BJ (cell line): ENCODE measurements at regions of chr5 and their contacts with region 1.

Region 1: GRCh38 chr5:177271113-177271512 is 32.4 kb downstream of the RAB24 start:
- DNase-seq: no peak
- H3K4me3 ChIP-seq: no peak overlapping the region
- H3K27me3 ChIP-seq: no peaks in the 10 kb centered on the region
- CTCF ChIP-seq: no peak

Region 2: DNA sequence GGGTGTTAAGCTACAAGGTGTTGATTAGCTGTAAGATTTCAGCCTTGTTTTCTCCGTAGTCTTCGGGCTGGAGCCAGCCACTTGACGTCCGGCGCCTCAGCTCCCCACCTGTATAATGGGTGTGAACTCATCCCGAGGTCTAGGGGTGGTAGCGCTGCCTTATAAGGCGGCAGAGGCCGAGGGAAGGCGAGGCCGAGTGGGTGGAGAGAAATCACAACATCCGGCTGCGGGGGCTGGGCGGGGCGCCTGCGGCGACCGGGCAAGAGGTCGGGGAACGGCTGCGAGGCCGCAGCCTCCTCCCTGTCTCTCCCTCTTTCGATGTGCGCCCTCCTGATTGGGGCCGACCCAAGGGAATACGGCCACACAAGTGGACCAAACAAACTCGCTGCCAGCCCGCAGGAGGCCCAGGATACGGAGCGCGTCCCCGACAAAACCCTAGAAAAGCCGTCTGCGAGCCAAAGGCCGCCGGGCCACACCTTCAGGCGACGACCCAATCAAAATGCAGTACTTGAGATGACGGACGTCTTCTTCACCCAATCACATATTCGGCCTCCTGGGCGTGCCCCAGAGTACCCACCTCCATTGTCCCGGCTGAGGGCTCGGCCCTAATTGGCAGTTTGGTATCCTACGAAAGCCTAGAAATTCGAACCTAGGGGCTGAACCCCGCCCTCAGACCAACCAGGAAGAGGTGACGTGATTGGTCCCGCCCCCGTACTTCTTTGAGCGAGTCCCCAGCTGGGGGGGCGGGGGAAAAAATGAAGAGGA is 154.9 kb after region 1 on chr5:
- CTCF ChIA-PET with region 1: no interaction called
- POLR2A ChIA-PET with region 1: interaction called, 13 read pairs
- DNase-seq: peak; percentile 100
- H3K4me3 ChIP-seq: peak overlapping the region; percentile 49
- H3K27me3 ChIP-seq: no peaks in the 10 kb centered on the region
- CTCF ChIP-seq: no peak